ENCODE measurements at regions of chr5 and their contacts with region 1.

Region 1: GRCh38 chr5:80255732-80256479 is at the start of gene SERINC5:
- DNase-seq: peak; percentile 92
- ATAC-seq: peak; percentile 75
- H3K4me3 Mint-ChIP-seq: peak within 1 kb of the TSS; percentile 93
- H3K27ac Mint-ChIP-seq: peak within 1 kb of the TSS; percentile 97
- H3K4me1 Mint-ChIP-seq: peaks cover 42% of the 10 kb centered on the region
- H3K27me3 Mint-ChIP-seq: no peaks in the 10 kb centered on the region
- total RNA-seq, gene SERINC5: 28.1 to 36.0 TPM

Region 2: DNA sequence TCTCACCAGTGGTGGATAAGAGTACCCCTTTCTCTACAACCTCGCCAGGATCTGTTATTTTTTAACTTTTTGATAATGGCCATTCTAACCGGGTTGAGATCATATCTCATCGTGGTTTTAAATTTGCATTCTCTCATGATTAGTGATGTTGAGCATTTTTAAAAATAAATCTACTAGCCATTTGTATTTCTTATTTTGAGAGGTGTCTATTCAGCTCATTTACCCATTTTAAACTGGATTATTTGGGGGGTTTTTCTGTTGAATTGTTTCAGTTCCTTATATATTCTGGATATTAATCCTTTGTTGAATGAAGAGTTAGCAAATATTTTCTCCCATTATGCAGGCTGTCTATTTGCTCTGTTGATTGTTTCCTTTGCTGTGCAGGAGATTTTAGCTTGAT is 1410.4 kb before region 1 on chr5:
- CTCF ChIA-PET with region 1: no interaction called
- POLR2A ChIA-PET with region 1: no interaction called
- intact Hi-C with region 1: no loop called
- DNase-seq: no peak
- ATAC-seq: no peak
- H3K4me3 Mint-ChIP-seq: no peak overlapping the region
- H3K27ac Mint-ChIP-seq: no peak overlapping the region
- H3K4me1 Mint-ChIP-seq: no peaks in the 10 kb centered on the region
- H3K27me3 Mint-ChIP-seq: no peaks in the 10 kb centered on the region

Region 3: DNA sequence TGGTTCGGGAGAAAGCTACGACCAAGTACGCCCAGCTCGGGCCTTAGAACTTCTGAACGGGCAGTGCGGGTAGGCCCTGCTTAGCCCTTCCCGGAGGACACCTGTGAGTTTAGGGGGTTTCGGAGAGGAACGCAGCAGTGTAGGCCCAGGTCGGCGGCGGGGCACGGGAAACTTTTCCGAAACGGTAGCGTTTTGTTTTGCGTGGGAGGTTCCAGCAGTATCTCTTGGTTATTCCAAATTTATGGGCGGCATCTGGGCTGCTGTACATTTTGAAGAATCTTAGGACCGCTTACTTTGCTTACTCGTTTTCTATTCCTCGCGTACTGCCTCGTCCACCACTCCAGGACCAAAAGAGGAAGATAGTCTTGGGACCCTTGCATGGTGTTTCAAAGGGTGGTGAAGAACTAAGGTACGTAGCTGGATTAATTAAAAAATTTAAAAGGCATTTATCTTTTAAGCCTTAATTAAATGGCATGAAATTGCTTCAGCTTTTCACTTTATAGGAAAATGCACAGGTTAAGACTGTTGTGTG is 643.2 kb before region 1 on chr5:
- CTCF ChIA-PET with region 1: no interaction called
- POLR2A ChIA-PET with region 1: no interaction called
- intact Hi-C with region 1: loop called in 1 of 2 experiments (anchors 10 kb)
- DNase-seq: no peak
- ATAC-seq: no peak
- H3K4me3 Mint-ChIP-seq: peak overlapping the region; percentile 96
- H3K27ac Mint-ChIP-seq: peak overlapping the region; percentile 97
- H3K4me1 Mint-ChIP-seq: peaks cover 35% of the 10 kb centered on the region
- H3K27me3 Mint-ChIP-seq: no peaks in the 10 kb centered on the region

Region 4: GRCh38 chr5:80125962-80126480 is 129.9 kb before region 1 on chr5:
- CTCF ChIA-PET with region 1: interaction called, 7 read pairs
- POLR2A ChIA-PET with region 1: interaction called, 5 read pairs
- intact Hi-C with region 1: loop called in 1 of 2 experiments (anchors 2 kb)
- DNase-seq: peak; percentile 33
- ATAC-seq: peak; percentile 92
- H3K4me3 Mint-ChIP-seq: peak overlapping the region; percentile 44
- H3K27ac Mint-ChIP-seq: peak overlapping the region; percentile 61
- H3K4me1 Mint-ChIP-seq: peaks cover 50% of the 10 kb centered on the region
- H3K27me3 Mint-ChIP-seq: no peaks in the 10 kb centered on the region

Region 5: GRCh38 chr5:80191991-80192398 is 63.9 kb before region 1 on chr5:
- CTCF ChIA-PET with region 1: interaction called, 5 read pairs
- POLR2A ChIA-PET with region 1: interaction called, 12 read pairs
- intact Hi-C with region 1: loop called in 1 of 2 experiments (anchors 5 kb)
- DNase-seq: peak; percentile 55
- ATAC-seq: peak; percentile 42
- H3K4me3 Mint-ChIP-seq: peak overlapping the region; percentile 47
- H3K27ac Mint-ChIP-seq: peak overlapping the region; percentile 99
- H3K4me1 Mint-ChIP-seq: peaks cover 84% of the 10 kb centered on the region
- H3K27me3 Mint-ChIP-seq: no peaks in the 10 kb centered on the region

Region 6: DNA sequence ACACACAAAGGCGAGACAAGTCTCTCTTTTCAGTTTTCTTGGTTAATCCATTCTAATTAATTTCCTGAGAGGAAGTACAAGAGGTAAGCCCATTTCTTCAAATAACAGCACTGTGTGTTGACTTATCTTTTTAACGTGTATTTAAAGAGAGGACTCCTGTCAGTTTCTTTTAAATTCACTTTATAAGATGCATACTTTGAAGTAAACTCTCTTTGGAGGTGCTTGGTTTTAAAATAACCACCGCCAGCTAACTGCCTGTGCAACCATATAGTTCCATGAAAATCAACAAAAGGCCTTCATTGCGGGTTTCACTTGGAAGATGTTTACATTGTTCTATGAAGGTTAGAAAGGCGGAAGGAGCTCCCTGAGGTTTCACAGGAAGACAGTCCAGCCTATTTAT is 13.0 kb after region 1 on chr5:
- CTCF ChIA-PET with region 1: interaction called, 4 read pairs
- POLR2A ChIA-PET with region 1: interaction called, 4 read pairs
- intact Hi-C with region 1: loop called (anchors 1 kb)
- DNase-seq: no peak
- ATAC-seq: peak; percentile 20
- H3K4me3 Mint-ChIP-seq: peak overlapping the region; percentile 46
- H3K27ac Mint-ChIP-seq: peak overlapping the region; percentile 91
- H3K4me1 Mint-ChIP-seq: peaks cover 49% of the 10 kb centered on the region
- H3K27me3 Mint-ChIP-seq: no peaks in the 10 kb centered on the region

Region 7: GRCh38 chr5:80296121-80296520 is 40.2 kb after region 1 on chr5:
- CTCF ChIA-PET with region 1: no interaction called
- POLR2A ChIA-PET with region 1: no interaction called
- intact Hi-C with region 1: no loop called
- DNase-seq: no peak
- ATAC-seq: no peak
- H3K4me3 Mint-ChIP-seq: no peak overlapping the region
- H3K27ac Mint-ChIP-seq: no peak overlapping the region
- H3K4me1 Mint-ChIP-seq: no peaks in the 10 kb centered on the region
- H3K27me3 Mint-ChIP-seq: no peaks in the 10 kb centered on the region

Region 8: DNA sequence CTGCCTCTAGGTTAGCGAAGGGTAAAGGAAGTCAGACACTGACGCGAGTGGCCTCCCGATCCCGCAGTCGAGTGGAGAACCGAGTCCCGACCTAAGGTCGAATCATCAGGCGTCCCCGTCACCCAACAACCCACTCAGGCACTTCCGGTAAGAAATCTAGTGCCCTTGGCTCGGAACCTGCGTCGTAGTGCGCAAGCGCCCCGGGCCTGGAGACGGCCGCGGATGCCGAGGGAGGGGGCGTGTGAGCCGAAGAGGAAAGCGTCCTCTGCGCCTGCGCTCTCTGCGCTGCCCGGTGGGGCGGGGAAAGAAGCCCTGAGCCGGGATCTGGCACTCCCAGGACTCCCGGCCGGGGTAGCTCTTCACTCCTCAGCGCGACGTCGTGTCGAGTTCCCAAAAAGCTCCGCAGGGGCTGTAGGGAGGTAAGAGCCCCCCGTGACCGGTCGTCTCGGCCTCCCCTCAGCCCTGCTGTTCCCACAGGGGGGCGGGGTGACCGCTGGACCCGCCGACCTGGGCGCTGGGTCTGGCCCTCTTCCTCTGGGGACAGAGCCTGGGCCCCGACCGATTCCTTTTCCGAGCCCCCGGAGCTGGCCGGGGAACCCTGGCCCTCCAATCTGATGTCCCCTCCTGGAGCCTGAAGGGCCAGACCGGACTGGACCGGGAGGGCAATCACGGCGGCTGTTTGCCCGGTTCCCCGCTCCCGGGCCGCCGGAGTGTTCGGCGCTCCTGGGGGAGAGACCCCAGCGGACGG is 152.0 kb after region 1 on chr5 and contains the start of gene ZFYVE16:
- CTCF ChIA-PET with region 1: no interaction called
- POLR2A ChIA-PET with region 1: no interaction called
- intact Hi-C with region 1: loop called (anchors 1 to 10 kb)
- DNase-seq: peak; percentile 98
- ATAC-seq: peak; percentile 94
- H3K4me3 Mint-ChIP-seq: peak within 1 kb of the TSS; percentile 82
- H3K27ac Mint-ChIP-seq: peak within 1 kb of the TSS; percentile 94
- H3K4me1 Mint-ChIP-seq: peaks cover 17% of the 10 kb centered on the region
- H3K27me3 Mint-ChIP-seq: no peaks in the 10 kb centered on the region
- total RNA-seq, gene ZFYVE16: 11.2 to 11.8 TPM

Measured in activated CD4-positive, alpha-beta T cell treated with anti-CD3 and anti-CD28 coated beads for 36 hours (primary cell).